Prostate gland (tissue), 2 donors: ENCODE measurements at regions of chr14 and their contacts with region 1.

Region 1: DNA sequence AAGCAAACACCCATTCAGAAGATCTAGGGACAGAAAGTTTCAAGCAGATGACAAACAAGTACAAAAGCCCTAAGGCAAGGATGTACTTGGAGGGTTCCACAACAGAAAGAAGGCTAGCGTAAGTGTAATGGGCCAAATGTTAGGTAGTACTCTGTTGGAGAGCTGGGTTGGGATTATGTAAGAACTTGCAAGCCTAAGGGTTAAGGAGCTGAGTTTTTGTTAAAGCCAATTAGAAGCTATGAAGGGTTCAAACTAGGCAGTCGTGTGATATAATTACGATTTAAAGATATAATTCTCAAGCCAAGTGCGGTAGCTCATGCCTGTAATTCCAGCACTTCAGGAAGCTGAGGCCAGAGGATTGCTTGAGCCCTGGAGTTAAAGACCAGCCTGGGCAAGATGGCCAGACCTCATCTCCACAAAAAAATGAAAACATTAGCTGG is 41.3 kb downstream of the HECTD1 start:
- DNase-seq: no peak
- H3K4me3 ChIP-seq: no peak overlapping the region
- H3K27ac ChIP-seq: no peak overlapping the region
- H3K4me1 ChIP-seq: peaks cover 8% of the 10 kb centered on the region
- H3K27me3 ChIP-seq: no peaks in the 10 kb centered on the region
- CTCF ChIP-seq: no peak
- POLR2A ChIP-seq: no peak

Region 2: DNA sequence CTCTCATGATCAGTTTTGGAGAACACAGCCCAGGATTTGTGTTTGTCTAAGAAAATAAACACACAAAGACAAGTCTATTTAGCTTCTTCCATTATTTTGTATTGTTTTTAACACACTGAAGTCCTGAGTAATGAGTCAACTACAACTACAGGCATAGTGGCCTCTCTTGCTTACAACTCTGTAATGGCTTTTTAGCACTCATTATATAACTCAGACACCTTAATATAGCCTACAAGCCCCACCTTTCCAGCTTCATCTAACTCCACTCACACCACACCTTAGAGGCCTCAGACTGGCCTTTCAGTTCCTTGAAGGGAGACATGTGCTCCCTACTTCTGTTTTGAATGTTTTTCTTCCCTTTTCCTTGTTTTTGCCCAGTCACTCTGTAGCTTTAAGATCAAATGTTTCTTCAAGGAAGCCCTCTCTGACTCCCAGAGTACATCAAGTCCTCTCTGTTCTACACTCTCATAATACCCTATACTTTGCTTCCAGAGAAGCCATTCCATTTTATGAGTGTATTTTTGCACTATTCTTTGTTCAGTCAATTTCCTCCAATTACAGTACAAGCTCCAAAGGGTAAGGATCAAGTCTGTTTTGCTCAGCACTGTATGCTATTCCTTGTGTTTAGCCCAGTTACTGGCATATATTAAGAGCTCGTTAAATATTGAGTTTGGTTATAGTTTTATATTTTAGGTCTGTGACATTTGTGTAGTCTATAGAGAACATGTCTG is 677.2 kb after region 1 on chr14:
- intact Hi-C with region 1: no loop called
- DNase-seq: no peak
- H3K4me3 ChIP-seq: no peak overlapping the region
- H3K27ac ChIP-seq: no peak overlapping the region
- H3K4me1 ChIP-seq: no peaks in the 10 kb centered on the region
- H3K27me3 ChIP-seq: no peaks in the 10 kb centered on the region
- CTCF ChIP-seq: no peak
- POLR2A ChIP-seq: no peak

Region 3: DNA sequence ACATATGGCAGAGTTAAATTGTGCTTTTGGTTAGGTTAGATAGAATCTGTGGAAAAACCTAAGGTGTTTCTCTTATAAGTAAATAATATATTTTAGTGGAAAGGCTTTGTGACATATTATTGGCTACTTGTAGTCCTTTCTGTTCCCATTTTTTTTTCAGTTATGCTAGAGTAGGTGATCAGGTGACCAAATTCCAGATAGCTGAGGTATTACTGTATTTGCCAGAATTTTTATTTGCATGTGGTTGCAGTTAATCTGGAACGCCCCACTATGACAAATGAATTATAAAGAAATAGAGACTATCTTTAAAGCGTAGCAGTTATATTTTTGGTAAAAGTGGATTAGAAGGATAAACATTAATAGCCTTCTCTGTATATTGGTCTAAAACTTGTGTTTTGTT is 962.8 kb after region 1 on chr14:
- intact Hi-C with region 1: loop called (anchors 5 kb)
- DNase-seq: no peak
- H3K4me3 ChIP-seq: no peak overlapping the region
- H3K27ac ChIP-seq: no peak overlapping the region
- H3K4me1 ChIP-seq: no peaks in the 10 kb centered on the region
- H3K27me3 ChIP-seq: no peaks in the 10 kb centered on the region
- CTCF ChIP-seq: no peak
- POLR2A ChIP-seq: no peak